Left cardiac atrium (tissue), 4 donors: ENCODE measurements at regions of chr1 and their contacts with region 1.

Region 1: DNA sequence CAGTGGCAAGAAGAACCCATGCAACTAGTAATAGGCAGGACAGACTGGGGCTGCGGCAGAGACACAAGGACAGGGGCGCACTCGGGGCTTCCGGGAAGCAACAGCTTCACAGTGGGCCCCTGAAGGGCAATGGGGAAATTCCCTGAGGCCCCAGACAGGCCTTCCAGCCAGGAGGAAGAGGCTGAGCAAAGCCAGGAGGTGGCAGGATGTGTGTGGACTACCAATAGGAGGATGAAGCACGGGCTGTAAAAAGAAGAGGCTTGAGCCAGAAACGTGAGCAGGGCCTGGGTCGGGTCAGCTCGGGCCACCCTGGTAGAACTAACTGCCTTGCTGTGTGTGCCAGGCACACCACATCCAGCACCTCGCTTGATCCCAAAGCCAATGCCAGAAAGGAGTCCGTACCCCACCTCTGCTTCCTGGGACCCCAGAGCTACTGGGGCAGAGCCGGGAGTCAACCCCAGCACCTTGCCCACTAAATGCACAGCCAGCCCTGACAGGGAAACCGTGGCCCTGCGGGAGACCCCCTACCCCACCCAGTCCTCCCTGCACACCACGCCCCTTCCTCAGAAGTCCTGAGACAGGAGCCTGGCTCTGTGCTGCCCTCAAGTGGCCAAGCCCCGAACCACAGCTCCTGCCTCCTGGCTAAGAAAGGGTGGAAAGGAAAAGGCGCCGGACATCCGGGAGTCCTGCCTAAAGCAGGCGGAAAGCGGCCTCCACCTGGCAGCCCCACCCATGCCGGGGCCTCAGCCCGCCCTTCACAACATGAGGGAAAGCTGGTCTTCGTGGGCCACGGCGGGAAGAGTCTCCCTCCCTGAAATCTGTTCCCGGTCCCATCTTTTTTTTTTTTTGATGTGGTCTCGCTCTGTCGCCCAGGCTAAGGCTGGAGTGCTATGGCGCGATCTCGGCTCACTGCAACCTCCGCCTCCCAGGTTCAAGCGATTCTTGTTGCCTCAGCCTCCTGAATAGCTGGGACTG is 33.7 kb downstream of the TTC39A start:
- DNase-seq: peak; percentile 85
- ATAC-seq: peak; percentile 80 to 86

Region 2: GRCh38 chr1:51192213-51192843 is 104.3 kb before region 1 on chr1:
- intact Hi-C with region 1: loop called in 1 of 2 experiments (anchors 5 kb)
- DNase-seq: peak; percentile 68
- ATAC-seq: peak; percentile 69 to 71

Region 3: DNA sequence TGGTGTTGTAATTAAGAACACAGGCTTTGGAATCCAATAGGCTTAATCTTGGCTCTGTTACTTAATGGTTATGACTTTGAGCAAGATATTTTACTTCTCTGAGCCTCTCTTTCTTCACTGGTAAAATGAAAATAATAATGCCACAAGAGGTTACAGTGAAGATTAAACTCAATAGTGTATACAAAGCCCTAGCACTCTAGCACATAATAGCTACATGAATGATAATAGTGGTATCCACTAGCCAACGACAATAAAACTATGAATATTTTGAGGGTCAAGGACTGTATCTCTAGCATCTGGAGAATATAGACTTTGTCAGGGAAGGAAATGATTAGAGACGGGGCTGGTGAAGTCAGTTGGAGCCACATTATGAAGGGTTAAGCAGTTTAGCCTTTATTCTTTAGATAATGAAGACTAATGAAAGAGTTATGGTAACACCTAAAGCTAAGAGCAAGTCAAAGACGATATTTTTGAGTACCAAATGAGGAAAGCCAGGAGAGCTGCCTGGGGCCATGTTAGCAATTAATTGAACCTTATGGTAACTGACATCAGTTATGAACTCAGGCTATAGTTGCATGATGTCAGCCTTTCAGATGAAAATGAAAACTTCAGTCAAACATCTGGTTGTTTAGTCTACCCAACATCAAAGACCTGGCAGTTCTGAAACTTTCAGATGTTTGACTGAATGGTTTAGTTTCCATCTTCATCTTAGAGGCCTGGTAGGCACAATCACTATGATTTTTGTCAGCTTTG is 93.4 kb before region 1 on chr1:
- intact Hi-C with region 1: no loop called
- DNase-seq: no peak
- ATAC-seq: no peak

Region 4: DNA sequence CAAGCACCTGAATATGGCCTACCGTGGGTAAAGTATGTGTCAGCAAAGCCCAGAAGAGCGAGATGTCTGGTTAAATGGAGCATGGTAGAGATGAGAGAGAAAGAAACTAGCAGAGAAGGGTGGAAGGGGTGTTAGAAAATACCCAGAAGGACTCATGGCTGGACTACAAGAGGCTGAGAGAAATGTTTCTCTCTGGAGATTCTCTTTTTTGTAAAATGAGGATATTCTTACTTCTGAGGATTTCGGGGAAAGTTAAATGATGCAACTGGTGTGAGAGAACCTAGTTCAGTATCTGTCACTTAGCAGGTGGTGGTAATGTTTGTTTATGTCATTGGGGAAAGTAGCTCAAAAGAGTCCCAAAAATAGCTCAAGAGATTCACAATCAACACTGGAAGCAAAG is 229.6 kb after region 1 on chr1:
- intact Hi-C with region 1: no loop called
- DNase-seq: no peak
- ATAC-seq: no peak

Region 5: GRCh38 chr1:51636764-51637522 is 340.3 kb after region 1 on chr1:
- intact Hi-C with region 1: no loop called
- DNase-seq: peak; percentile 47
- ATAC-seq: peak in 1 of 2 donors; percentile 92